BJ (cell line): ENCODE measurements at regions of chr1 and their contacts with region 1.

Region 1: DNA sequence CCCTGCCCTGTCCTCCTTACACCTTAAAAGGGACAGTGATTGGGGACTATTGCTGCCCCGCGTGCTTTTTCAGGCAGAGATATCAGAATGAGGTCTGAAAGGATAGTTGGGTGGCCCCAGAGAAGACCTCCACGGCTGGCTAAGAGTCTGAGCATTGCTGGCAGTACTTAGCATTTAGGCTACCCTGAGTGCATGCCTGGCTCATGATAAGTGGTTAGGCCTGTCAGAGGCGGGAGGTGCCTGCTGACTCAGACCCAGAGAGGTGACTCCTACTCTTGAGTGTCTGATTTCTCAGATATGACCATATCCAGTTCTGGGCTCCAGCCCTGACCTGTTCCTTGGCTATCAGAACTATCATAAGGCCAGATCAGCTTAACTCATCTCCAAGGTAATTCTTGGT is 213.7 kb downstream of the PBX1 start:
- DNase-seq: peak; percentile 75
- H3K4me3 ChIP-seq: no peak overlapping the region
- H3K27me3 ChIP-seq: no peaks in the 10 kb centered on the region
- CTCF ChIP-seq: no peak

Region 2: DNA sequence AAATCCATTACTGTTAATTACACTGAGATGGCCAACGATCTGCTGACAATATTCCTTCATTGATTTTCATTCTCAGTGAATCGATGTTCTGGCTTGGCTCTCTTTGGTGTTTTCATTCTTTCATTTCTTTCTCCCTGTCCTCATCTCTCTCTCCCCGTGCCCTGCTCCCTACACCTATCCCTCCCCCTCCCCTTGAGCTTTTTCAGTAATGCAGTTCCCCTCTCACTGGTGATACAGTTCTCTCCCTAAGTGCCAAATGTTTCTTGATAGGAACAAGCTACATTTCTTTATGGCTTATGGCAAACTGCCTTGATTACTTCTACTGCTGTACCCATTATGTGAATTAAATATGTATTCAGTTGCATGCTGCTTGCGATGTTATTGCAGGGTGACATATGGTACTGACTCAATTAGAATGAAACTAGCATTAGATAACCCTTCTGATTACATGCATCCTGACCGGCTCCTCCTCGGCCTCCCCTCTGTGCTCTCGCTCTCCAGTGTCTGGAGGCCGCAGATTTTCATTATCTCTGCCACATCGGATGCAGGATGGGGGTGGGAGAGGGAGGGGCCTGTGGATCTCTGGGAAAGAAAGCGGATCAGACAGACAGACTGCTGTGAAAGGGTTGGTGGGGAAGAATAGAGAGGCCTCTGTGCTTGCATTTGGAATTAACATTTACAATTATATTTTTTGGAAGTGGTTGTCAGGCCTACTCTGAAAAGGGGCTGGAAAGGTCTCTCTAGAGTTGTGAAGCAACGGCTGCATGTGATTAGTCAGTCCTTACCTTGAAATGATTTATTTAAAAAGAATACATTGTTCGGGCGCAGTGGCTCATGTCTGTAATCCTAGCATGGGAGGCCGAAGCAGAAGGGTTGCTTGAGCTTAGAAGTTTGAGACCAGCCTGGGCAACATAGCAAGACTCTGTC is 82.7 kb before region 1 on chr1:
- CTCF ChIA-PET with region 1: no interaction called
- POLR2A ChIA-PET with region 1: interaction called, 10 read pairs
- DNase-seq: no peak
- H3K4me3 ChIP-seq: no peak overlapping the region
- H3K27me3 ChIP-seq: no peaks in the 10 kb centered on the region
- CTCF ChIP-seq: no peak

Region 3: DNA sequence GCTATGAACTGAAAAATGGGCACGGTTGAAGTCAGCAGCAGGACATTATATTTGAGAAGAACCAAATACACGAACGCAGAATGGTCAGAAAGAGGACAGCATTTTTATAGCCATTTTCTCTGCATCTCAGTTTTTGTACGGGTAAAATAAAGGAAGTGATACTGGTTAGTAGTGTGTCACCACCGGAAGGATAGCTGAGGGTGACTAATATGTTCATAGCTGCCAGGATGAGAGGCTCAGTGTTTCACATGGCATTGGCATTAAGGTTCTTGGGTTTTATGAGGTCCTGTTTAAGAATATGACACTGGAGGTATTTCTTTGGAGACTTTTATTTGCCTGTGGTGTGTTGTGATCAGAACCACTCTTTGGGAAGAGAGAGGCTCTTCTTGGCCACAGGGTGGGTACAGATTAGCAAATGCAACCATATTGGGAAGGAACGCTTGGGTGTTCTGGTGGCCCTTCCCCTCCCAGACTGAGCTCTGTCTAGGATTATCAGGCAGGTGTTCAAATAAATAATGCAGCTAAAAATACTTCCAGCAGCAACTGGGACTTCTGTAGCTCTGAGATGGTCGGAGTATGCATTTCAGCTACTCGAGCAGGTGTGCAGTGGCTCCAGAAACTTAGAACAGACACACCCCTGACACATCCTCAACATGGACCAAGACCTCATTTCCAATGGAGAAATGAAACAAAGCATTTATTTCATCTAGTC is 55.5 kb before region 1 on chr1:
- CTCF ChIA-PET with region 1: no interaction called
- POLR2A ChIA-PET with region 1: no interaction called
- DNase-seq: no peak
- H3K4me3 ChIP-seq: no peak overlapping the region
- H3K27me3 ChIP-seq: no peaks in the 10 kb centered on the region
- CTCF ChIP-seq: no peak

Region 4: GRCh38 chr1:164823486-164824279 is 51.0 kb after region 1 on chr1:
- CTCF ChIA-PET with region 1: no interaction called
- POLR2A ChIA-PET with region 1: no interaction called
- DNase-seq: peak; percentile 14
- H3K4me3 ChIP-seq: no peak overlapping the region
- H3K27me3 ChIP-seq: no peaks in the 10 kb centered on the region
- CTCF ChIP-seq: no peak